ENCODE measurements at regions of chr15 and their contacts with region 1.

Region 1: DNA sequence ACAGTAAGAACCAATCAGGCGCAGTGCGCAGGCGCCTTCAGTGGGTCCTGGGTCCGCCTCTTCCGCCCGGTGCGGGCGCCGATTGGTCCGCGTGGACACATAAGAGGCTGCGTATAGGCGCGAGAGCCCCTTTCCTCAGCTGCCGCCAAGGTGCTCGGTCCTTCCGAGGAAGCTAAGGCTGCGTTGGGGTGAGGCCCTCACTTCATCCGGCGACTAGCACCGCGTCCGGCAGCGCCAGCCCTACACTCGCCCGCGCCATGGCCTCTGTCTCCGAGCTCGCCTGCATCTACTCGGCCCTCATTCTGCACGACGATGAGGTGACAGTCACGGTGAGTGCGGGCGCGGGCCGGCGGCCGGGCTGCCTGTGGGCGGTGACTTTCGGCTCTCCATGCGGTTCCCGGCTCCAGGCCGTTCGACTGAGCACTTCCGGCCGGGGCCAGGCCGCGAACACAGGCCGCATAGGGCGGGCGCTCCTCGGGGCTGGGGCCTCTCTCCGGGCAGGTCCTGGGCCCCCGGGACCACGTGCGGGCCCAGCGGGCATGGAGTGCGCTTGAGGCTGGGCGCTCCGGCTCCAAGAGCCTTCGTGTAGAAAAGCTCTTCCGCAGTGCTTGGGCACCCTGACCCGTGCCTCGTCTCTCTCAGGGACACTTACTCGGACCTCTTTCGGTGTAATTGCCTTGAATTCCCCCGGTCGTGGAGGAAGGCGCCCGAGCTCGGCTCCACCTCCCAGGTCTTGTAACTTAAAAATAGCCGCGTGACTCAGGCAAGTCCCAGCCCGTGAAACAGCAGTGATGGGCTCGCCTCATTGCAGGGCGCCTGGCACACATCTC is at the start of gene RPLP1:
- DNase-seq: peak; percentile 95
- H3K4me3 Mint-ChIP-seq: peak within 1 kb of the TSS; percentile 95
- H3K27ac Mint-ChIP-seq: peak within 1 kb of the TSS; percentile 95
- H3K4me1 Mint-ChIP-seq: peaks cover 8% of the 10 kb centered on the region
- H3K27me3 Mint-ChIP-seq: no peaks in the 10 kb centered on the region
- CTCF ChIP-seq: no peak
- total RNA-seq, gene RPLP1: 2,295 and 2,621 TPM in 2 replicates

Region 2: GRCh38 chr15:68972201-68973065 is 480.5 kb before region 1 on chr15:
- CTCF ChIA-PET with region 1: no interaction called
- POLR2A ChIA-PET with region 1: no interaction called
- intact Hi-C with region 1: no loop called
- DNase-seq: no peak
- H3K4me3 Mint-ChIP-seq: no peak overlapping the region
- H3K27ac Mint-ChIP-seq: no peak overlapping the region
- H3K4me1 Mint-ChIP-seq: no peaks in the 10 kb centered on the region
- H3K27me3 Mint-ChIP-seq: no peaks in the 10 kb centered on the region
- CTCF ChIP-seq: no peak

Region 3: DNA sequence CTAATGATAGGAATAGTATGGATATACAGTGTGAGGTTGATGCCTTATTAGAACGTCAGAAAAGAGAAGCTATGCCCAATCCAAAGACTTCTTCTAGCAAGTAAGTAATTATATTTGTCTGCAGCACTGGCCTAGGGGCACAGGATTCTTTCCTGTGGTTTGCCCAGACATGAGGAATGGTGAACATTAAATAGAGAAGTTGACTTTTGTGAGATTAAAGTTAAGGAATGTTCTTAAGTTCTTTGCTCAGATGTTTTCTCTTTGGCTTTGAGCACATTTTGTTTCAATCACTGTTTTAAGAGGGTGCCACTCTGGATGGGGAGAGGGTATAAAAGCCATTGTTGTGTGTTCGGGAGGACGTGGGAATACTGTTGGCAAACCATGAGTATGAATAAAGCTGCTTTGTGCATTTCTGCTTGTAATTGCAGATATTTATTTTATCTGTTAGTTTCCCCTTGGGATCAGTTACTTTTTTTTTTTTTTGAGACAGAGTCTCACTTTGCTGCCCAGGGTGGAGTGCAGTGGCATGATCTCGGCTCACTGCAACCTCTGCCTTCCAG is 30.5 kb before region 1 on chr15:
- CTCF ChIA-PET with region 1: no interaction called
- POLR2A ChIA-PET with region 1: interaction called, 132 read pairs
- intact Hi-C with region 1: no loop called
- DNase-seq: no peak
- H3K4me3 Mint-ChIP-seq: no peak overlapping the region
- H3K27ac Mint-ChIP-seq: peak overlapping the region; percentile 55
- H3K4me1 Mint-ChIP-seq: peaks cover 21% of the 10 kb centered on the region
- H3K27me3 Mint-ChIP-seq: no peaks in the 10 kb centered on the region
- CTCF ChIP-seq: no peak

Region 4: DNA sequence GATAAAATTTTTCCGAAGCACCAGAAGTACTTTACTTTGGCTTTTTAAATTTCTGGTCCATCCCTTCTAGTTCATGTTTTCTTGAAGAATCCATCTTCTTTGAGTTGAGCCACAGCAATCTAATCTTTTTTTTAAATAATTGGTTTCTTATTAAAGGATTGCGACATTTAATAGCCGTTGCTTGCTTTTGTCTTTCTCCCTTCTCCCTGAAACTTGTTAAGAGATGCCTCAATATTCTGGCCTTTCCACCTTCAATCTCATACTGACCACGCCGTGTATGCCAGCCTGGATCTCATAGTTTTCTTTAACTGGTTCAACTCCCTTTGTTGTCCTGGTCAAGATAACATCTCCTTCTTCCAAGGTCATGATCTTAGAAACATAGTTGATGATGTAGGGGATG is 18.7 kb before region 1 on chr15:
- CTCF ChIA-PET with region 1: interaction called, 4 read pairs
- POLR2A ChIA-PET with region 1: interaction called, 32 read pairs
- intact Hi-C with region 1: no loop called
- DNase-seq: no peak
- H3K4me3 Mint-ChIP-seq: no peak overlapping the region
- H3K27ac Mint-ChIP-seq: no peak overlapping the region
- H3K4me1 Mint-ChIP-seq: peaks cover 5% of the 10 kb centered on the region
- H3K27me3 Mint-ChIP-seq: no peaks in the 10 kb centered on the region
- CTCF ChIP-seq: no peak

Region 5: DNA sequence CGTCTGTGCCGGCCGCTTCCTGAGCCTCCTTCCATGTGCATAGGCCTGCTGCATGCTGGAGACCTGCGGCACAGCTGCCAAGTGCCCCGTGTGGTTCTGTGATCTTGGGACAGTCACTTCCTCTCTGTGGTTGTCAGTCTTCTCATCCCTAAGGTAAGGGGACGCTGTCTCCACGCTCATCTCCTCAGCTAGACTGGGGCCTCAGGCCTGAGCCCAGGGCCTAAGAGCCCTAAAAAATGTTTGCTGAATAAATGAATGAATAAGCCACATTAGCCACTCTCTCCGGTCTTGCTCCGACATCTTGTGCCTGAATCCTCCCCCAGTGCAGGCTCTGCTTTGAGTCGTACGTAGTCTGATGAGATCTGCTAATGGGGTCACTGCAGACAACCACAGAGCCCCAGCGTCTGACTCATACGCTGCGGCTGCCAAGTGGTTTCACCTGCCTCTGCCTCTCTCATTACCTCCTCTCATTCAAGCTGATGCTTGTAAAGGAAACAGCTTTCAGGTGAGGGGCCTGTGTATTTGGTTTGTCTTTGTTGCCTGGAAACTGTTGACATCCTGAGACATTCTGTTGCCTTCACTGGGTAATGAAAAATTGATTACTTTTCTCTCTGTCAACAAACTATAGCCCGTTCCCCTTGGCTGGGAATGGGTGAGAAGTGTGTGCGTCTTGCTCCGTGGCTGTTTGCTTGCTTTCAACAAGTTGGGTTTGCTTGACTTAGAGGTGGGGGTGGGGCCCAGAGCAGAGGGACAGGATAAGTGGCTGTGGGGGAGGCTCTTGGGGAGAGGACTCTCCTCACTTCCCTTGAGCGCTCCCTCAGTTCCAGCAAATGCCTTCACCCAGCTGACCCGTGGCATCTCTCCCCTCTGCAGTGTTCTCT is 15.6 kb after region 1 on chr15:
- CTCF ChIA-PET with region 1: interaction called, 14 read pairs
- POLR2A ChIA-PET with region 1: interaction called, 139 read pairs
- intact Hi-C with region 1: no loop called
- DNase-seq: peak; percentile 82
- H3K4me3 Mint-ChIP-seq: no peak overlapping the region
- H3K27ac Mint-ChIP-seq: no peak overlapping the region
- H3K4me1 Mint-ChIP-seq: peaks cover 11% of the 10 kb centered on the region
- H3K27me3 Mint-ChIP-seq: no peaks in the 10 kb centered on the region
- CTCF ChIP-seq: no peak

Region 6: DNA sequence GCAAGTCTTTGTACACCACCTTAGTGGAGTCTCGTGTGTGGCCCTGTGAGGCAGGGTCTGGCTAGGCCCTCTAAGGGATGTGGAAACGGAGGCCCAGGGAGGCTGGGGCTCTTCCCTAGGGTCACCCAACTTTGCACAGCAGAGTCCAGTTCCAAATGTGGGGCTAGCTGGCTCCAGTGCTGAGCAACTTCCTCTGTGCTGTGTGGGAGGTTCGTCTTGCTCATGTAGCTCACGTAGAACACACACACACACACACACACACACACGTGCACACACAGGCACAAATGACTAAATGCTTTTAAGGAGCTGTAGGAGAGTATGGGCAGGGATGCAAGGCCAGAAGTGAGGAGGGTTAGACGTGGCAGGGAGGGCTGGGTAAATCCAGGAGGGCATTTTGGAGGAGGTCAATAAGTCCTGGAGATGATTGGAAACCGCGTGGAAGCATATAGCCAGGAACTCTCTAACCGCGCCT is 213.5 kb after region 1 on chr15:
- CTCF ChIA-PET with region 1: no interaction called
- POLR2A ChIA-PET with region 1: no interaction called
- intact Hi-C with region 1: no loop called
- DNase-seq: no peak
- H3K4me3 Mint-ChIP-seq: no peak overlapping the region
- H3K27ac Mint-ChIP-seq: no peak overlapping the region
- H3K4me1 Mint-ChIP-seq: no peaks in the 10 kb centered on the region
- H3K27me3 Mint-ChIP-seq: no peaks in the 10 kb centered on the region
- CTCF ChIP-seq: no peak

Measured in MCF 10A (cell line).